A673 (cell line): ENCODE measurements at regions of chr7 and their contacts with region 1.

Region 1: GRCh38 chr7:73701357-73701995 is 18.0 kb downstream of the STX1A start:
- DNase-seq: peak; percentile 58
- H3K4me3 ChIP-seq: no peak overlapping the region
- H3K27ac ChIP-seq: peak overlapping the region; percentile 68
- H3K4me1 ChIP-seq: peaks cover 34% of the 10 kb centered on the region
- H3K27me3 ChIP-seq: no peaks in the 10 kb centered on the region
- CTCF ChIP-seq: peak; percentile 58

Region 2: DNA sequence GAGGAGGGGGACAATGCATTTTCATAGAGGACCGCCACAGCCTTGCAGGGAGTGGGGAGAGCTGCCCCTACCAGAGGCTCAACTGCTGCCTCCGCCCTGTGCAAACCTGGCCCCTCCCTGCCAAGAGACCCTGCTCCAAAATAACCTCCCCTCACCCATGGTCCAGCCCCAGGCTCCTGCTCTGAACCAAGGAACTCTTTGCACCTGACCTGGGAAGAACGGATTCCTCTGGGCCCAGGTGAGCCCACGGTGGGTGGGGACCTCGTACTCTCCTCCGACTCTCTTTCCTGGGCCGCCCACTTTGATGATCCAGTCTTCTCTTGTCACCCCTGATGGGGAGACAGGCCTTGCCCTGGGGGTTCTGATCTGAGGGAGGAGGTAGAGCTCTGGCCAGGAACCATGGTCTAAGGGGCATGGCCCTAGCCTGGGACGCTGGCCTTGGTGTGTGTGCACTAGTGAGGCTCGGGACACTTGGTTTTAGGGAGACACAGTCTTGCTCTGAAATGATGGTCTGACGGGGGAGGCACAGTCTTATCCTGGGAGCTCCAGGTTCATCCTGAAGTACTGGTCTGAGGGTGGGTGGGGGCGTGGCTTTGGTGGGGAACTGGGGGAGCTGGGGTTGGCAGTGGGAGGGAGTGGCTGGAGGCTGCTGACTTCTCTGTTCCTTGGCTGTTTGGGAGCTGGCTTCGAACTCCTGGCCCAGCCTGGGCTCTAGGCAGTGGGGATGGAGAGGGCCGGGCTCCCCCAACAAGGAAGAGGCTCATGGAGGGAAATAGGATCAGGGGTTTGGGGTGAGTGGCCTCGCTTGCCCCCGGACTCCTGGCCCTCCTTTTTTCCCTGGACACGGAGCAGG is 202.7 kb after region 1 on chr7:
- CTCF ChIA-PET with region 1: interaction called, 15 read pairs
- POLR2A ChIA-PET with region 1: no interaction called
- intact Hi-C with region 1: no loop called
- DNase-seq: no peak
- H3K4me3 ChIP-seq: no peak overlapping the region
- H3K27ac ChIP-seq: no peak overlapping the region
- H3K4me1 ChIP-seq: no peaks in the 10 kb centered on the region
- H3K27me3 ChIP-seq: no peaks in the 10 kb centered on the region
- CTCF ChIP-seq: no peak